AG04449 (cell line): ENCODE measurements at regions of chr17 and their contacts with region 1.

Region 1: GRCh38 chr17:62065598-62066468 is 755 bp upstream of the MED13 start:
- DNase-seq: peak; percentile 79
- H3K4me3 ChIP-seq: peak overlapping the region; percentile 95
- CTCF ChIP-seq: peak; percentile 86

Region 2: DNA sequence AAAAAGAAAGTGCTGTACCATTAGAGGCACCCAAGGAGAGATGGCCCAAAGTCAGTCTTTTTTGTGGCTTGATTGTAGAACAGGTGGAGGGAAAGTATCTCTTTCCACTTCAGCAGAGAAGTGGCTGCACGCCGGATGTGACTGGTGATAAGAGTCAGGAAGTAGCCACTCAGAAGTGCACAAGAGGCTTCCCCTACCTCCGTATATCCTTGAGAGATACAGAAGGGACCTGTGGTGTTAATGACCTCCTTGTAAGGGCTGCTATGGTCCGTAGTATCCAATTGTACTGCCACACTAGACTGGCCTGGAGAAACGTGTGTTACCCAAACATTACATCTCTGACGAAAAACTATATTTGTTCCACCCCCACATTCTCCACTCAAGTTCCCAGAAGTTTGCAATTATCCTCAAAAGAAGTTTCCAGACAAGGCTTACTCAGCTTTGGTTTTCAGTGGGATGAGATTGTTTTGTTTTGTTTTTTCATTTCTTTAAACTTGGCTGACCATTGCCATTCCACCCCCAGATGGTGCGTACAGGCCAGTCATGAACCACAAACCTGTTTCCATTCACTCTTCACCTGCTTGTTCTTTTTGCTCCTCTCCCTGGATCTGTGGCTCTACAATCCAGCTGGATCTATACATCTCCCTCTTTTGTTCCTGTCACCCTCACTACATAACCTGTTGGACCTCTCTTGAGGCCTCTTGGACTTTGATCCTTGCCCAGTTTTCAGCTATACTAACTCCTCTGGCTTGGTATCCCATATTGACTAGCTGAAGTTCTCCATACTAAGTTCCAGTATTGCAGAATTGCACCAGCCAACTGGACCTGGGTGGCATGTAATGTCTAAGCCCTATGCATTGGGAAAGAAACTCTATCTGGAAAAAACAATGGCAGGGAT is 19.9 kb after region 1 on chr17:
- CTCF ChIA-PET with region 1: interaction called, 10 read pairs
- POLR2A ChIA-PET with region 1: no interaction called
- DNase-seq: no peak
- H3K4me3 ChIP-seq: no peak overlapping the region
- CTCF ChIP-seq: no peak

Region 3: DNA sequence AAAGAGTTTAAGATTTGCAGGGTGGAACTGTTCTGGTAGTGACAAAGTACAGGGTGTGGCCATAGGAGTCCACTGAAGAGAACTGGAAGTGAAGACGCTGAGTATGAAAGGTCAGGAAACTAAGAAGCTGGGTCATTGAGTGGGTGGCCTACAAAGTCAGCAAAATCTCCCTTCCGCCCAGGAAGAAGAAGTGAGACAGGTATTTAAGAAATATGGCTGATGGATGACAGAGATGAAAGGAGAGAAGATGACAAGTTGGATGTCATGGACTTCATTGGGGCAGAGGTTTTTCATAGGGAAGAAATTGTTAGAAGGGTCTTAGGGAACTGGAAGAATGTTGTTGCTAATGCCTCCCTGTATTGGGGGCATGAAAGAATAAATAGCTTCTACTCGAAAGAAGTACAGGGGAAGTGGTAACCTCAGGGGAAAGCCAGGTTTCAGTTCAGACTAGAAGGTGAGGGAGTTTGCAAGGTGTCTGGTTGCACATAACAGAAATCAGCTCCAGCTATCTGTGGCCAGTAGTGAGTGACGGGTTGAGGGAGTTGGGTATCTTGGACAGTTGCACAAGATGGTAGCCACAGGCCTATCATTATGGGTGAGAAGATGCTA is 32.9 kb after region 1 on chr17:
- CTCF ChIA-PET with region 1: interaction called, 11 read pairs
- POLR2A ChIA-PET with region 1: no interaction called
- DNase-seq: no peak
- H3K4me3 ChIP-seq: no peak overlapping the region
- CTCF ChIP-seq: no peak